Heart left ventricle (tissue), 16 donors: ENCODE measurements at regions of chr16 and their contacts with region 1.

Region 1: GRCh38 chr16:56317998-56318826 is 107.1 kb downstream of the AMFR start:
- DNase-seq: peak; percentile 81 to 91 (median 86)
- ATAC-seq: peak; percentile 91 to 99 (median 96)
- H3K4me3 ChIP-seq: peak overlapping the region in 10 of 12 donors; percentile 16 to 49 (median 34)
- H3K27ac ChIP-seq: no peak overlapping the region
- H3K4me1 ChIP-seq: peaks cover 0 to 9% (median 4%) of the 10 kb centered on the region in 12 donors
- H3K27me3 ChIP-seq: no peaks in the 10 kb centered on the region
- CTCF ChIP-seq: peak; percentile 92 to 97 (median 94)
- POLR2A ChIP-seq: no peak

Region 2: DNA sequence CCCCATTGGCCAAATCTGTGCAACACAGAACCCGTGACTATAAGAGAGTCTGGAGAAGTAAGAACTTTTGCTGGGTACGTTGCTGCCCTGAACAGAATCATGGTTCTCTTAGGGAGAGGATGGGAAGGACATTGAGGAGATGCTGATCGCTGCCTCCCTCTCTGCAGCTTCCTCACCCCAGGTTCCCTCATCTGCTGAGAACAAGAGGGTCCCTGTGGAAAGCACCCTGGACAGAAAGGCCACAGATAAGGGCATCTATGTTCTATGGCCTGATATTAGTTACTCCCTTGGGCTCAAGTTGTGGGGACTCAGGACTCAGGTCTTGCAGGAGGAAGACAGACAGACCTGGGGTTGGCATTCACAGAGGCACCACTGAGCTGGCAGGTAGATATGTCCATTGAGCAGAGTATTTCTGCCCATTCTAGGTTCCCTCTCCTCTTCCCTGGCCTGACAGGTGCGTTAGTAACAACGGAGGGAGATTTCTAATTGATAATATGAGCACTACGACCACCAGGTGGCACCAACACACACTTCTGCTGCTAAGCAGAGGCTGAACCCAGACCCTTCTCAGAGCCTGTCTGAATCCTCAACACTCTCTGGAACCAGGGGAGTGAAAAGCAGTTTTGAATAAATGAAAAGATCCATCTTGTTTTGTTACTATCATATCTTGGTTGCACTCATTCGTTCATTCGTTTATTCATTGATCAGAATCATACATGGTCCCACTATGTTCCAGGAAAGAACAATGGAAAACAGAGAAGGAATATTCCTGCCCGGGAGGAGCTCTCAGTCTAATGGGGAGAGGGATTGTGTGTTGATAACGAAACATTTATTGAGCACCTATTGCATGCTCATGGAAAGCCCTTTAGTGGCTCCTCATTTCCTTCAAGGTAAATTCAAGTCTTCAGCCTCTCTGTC is 606.0 kb before region 1 on chr16:
- intact Hi-C with region 1: loop called in 2 of 10 experiments (anchors 10 kb)
- DNase-seq: peak in 4 of 5 donors; percentile 49 to 72 (median 54)
- ATAC-seq: peak in 3 of 4 donors; percentile 63 to 79 (median 72)
- H3K4me3 ChIP-seq: no peak overlapping the region
- H3K27ac ChIP-seq: no peak overlapping the region
- H3K4me1 ChIP-seq: no peaks in the 10 kb centered on the region
- H3K27me3 ChIP-seq: peaks cover 0 to 46% (median 9%) of the 10 kb centered on the region in 9 donors
- CTCF ChIP-seq: peak; percentile 51 to 83 (median 68)
- POLR2A ChIP-seq: no peak

Region 3: DNA sequence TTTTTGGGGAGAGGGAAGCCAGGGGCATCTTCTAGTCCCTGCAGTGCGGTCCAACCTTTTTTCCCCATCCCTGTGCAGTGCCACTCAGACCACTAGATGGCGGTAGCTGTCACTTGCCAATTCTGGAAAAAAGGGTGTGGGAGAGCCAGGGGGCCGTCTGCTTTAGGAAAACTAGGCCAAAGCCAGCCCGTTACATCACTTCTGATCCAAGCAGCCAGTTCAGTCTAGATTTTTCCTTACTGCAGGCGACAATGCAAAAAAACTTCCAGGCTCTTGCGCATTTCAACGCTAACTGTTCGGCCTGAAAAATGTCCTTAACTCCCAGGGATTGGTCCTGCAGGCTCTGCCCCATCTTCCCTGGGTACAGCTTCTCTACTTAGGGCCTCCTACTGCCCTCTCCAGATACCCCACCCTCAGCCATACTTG is 373.8 kb before region 1 on chr16:
- intact Hi-C with region 1: loop called (anchors 1 to 2 kb)
- DNase-seq: peak; percentile 59 to 77 (median 71)
- ATAC-seq: peak; percentile 80 to 95 (median 89)
- H3K4me3 ChIP-seq: no peak overlapping the region
- H3K27ac ChIP-seq: peak overlapping the region in 1 of 12 donors; percentile 14
- H3K4me1 ChIP-seq: peaks cover 0 to 6% (median 0%) of the 10 kb centered on the region in 12 donors
- H3K27me3 ChIP-seq: peaks cover 0 to 5% (median 0%) of the 10 kb centered on the region in 9 donors
- CTCF ChIP-seq: peak; percentile 85 to 96 (median 92)
- POLR2A ChIP-seq: no peak

Region 4: DNA sequence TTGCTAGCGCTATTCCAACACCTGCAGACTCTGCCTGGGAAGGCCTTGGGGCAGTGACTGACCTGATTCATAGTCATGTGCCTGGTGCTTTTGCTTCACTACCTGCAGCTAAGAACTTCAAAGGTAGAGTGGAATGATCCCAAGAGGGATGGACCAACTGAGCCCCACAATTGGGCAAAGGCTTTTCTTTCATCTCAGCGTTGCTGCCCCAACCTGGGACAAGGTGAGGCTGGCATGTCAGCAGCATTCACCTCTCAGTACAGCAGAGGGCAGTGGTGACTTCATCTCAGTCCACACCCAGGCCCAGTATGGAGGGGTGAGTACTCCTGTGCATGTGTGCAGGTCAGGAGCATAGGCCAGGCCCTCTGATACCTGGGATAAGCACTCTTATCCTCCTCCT is 276.5 kb before region 1 on chr16:
- intact Hi-C with region 1: loop called (anchors 1 to 5 kb)
- DNase-seq: peak in 4 of 5 donors; percentile 22 to 37 (median 30)
- ATAC-seq: peak; percentile 69 to 93 (median 92)
- H3K4me3 ChIP-seq: no peak overlapping the region
- H3K27ac ChIP-seq: no peak overlapping the region
- H3K4me1 ChIP-seq: peaks cover 0 to under 1% (median 0%) of the 10 kb centered on the region in 12 donors
- H3K27me3 ChIP-seq: no peaks in the 10 kb centered on the region
- CTCF ChIP-seq: peak in 11 of 12 donors; percentile 32 to 57 (median 46)
- POLR2A ChIP-seq: no peak

Region 5: GRCh38 chr16:56102183-56102686 is 216.0 kb before region 1 on chr16:
- intact Hi-C with region 1: loop called in 1 of 10 experiments (anchors 10 kb)
- DNase-seq: peak; percentile 47 to 73 (median 66)
- ATAC-seq: peak; percentile 84 to 90 (median 90)
- H3K4me3 ChIP-seq: peak overlapping the region in 10 of 12 donors; percentile 28 to 58 (median 38)
- H3K27ac ChIP-seq: peak overlapping the region; percentile 34 to 79 (median 62)
- H3K4me1 ChIP-seq: peaks cover 0 to 18% (median 8%) of the 10 kb centered on the region in 12 donors
- H3K27me3 ChIP-seq: no peaks in the 10 kb centered on the region
- CTCF ChIP-seq: no peak
- POLR2A ChIP-seq: no peak

Region 6: DNA sequence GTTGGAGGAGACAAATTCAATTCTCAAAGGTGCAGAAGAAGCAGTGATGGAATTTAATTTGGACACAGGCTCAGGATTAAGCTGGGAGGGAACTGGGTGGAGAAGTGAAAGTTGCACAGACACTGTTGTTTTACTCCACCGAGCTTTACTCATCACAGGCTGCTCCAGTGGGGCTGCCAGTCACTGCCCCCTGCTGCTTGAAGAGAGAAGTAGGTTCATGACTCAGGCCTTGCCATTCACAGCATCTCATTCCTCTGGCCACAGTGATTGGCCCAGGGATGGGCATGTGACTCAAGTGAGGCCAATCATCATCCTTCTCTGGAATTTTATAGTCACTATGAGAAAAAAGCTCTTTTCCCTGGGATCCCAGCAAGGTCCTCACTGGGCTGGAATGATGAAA is 115.2 kb before region 1 on chr16:
- intact Hi-C with region 1: loop called in 3 of 10 experiments (anchors 10 kb)
- DNase-seq: no peak
- ATAC-seq: peak; percentile 37 to 81 (median 68)
- H3K4me3 ChIP-seq: no peak overlapping the region
- H3K27ac ChIP-seq: peak overlapping the region in 1 of 12 donors; percentile 39
- H3K4me1 ChIP-seq: peaks cover 0 to 26% (median 12%) of the 10 kb centered on the region in 12 donors
- H3K27me3 ChIP-seq: no peaks in the 10 kb centered on the region
- CTCF ChIP-seq: peak in 10 of 12 donors; percentile 15 to 46 (median 38)
- POLR2A ChIP-seq: no peak

Region 7: GRCh38 chr16:56673921-56674320 is 355.7 kb after region 1 on chr16:
- intact Hi-C with region 1: no loop called
- DNase-seq: no peak
- ATAC-seq: peak in 3 of 4 donors; percentile 42 to 66 (median 55)
- H3K4me3 ChIP-seq: no peak overlapping the region
- H3K27ac ChIP-seq: no peak overlapping the region
- H3K4me1 ChIP-seq: peaks cover 0 to 19% (median 9%) of the 10 kb centered on the region in 12 donors
- H3K27me3 ChIP-seq: peaks cover 0 to 58% (median 23%) of the 10 kb centered on the region in 9 donors
- CTCF ChIP-seq: peak; percentile 37 to 67 (median 55)
- POLR2A ChIP-seq: no peak